GM12878 (cell line): ENCODE measurements at regions of chr7 and their contacts with region 1.

Region 1: GRCh38 chr7:134690016-134690415 is 43.4 kb downstream of the BPGM start:
- DNase-seq: no peak
- ATAC-seq: peak; percentile 75
- H3K4me3 ChIP-seq: no peak overlapping the region
- H3K27ac ChIP-seq: no peak overlapping the region
- H3K4me1 ChIP-seq: no peaks in the 10 kb centered on the region
- H3K27me3 ChIP-seq: peaks cover 0 to 2% of the 10 kb centered on the region in 2 experiments; a peak in 1 of 4 replicates
- CTCF ChIP-seq: peak in 1 of 3 experiments; percentile 10; a peak in 1 of 6 replicates
- EP300 ChIP-seq: no peak
- POLR2A ChIP-seq: no peak
- RAD21 ChIP-seq: peak; percentile 41

Region 2: DNA sequence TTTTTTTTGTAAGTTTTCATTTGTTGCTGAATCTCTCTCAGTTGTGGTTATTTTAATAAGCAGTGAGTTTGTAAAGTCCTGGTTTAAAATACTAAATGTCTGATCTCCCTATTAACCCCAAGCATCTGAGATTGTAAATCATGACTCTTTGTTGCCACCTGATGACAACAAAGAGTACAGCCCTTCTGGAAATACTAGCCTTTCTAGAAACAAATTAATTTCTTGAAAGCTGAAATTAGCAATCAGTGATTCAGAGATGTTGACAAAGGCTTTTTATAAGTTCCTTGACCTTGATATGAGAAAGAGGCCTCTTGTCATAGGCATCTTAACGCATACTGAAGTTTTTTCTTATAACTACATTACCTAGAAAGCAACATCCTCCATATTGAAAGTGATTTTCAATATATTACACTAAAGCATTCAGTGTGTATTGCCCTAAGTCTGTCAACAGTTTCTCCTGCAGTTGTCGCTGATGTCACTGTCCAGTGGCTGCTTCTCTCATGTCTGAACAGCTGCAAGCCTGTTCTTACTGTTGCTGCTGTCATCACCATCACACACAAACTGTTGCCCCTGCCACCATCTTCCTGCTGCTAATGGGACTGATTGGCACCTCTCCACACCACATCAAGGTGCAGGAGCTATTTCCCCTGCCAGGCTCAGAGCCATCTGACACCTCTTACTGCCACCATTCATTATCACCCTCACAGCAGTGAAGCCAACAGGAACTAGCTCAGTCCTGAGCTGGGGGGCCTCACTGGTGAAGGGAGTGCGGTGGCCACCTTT is 658.0 kb before region 1 on chr7:
- CTCF ChIA-PET with region 1: no interaction called
- POLR2A ChIA-PET with region 1: no interaction called
- RAD21 ChIA-PET with region 1: no interaction called
- SMC1A ChIA-PET with region 1: no interaction called
- in situ Hi-C with region 1: no loop called
- intact Hi-C with region 1: no loop called
- DNase-seq: no peak
- ATAC-seq: peak; percentile 28; the same call in 2 of the 3 replicates
- H3K4me3 ChIP-seq: no peak overlapping the region
- H3K27ac ChIP-seq: no peak overlapping the region
- H3K4me1 ChIP-seq: no peaks in the 10 kb centered on the region
- H3K27me3 ChIP-seq: no peaks in the 10 kb centered on the region
- CTCF ChIP-seq: peak in 1 of 3 experiments; percentile 11; a peak in 1 of 6 replicates
- EP300 ChIP-seq: no peak
- POLR2A ChIP-seq: no peak
- RAD21 ChIP-seq: no peak

Region 3: GRCh38 chr7:134701272-134701671 is 11.3 kb after region 1 on chr7:
- CTCF ChIA-PET with region 1: interaction called, 32 read pairs
- POLR2A ChIA-PET with region 1: no interaction called
- RAD21 ChIA-PET with region 1: interaction called, 3 read pairs
- SMC1A ChIA-PET with region 1: interaction called, 11 read pairs
- in situ Hi-C with region 1: no loop called
- intact Hi-C with region 1: no loop called
- DNase-seq: no peak
- ATAC-seq: peak; percentile 75
- H3K4me3 ChIP-seq: no peak overlapping the region
- H3K27ac ChIP-seq: no peak overlapping the region
- H3K4me1 ChIP-seq: no peaks in the 10 kb centered on the region
- H3K27me3 ChIP-seq: peaks cover 0 to 7% of the 10 kb centered on the region in 2 experiments; a peak in 3 of 4 replicates
- CTCF ChIP-seq: peak; percentile 29 to 56 (median 47); a peak in 5 of 6 replicates
- EP300 ChIP-seq: no peak
- POLR2A ChIP-seq: no peak
- RAD21 ChIP-seq: peak; percentile 62